Activated CD8-positive, alpha-beta T cell treated with anti-CD3 and anti-CD28 coated beads for 36 hours (primary cell): ENCODE measurements at regions of chr2 and their contacts with region 1.

Region 1: DNA sequence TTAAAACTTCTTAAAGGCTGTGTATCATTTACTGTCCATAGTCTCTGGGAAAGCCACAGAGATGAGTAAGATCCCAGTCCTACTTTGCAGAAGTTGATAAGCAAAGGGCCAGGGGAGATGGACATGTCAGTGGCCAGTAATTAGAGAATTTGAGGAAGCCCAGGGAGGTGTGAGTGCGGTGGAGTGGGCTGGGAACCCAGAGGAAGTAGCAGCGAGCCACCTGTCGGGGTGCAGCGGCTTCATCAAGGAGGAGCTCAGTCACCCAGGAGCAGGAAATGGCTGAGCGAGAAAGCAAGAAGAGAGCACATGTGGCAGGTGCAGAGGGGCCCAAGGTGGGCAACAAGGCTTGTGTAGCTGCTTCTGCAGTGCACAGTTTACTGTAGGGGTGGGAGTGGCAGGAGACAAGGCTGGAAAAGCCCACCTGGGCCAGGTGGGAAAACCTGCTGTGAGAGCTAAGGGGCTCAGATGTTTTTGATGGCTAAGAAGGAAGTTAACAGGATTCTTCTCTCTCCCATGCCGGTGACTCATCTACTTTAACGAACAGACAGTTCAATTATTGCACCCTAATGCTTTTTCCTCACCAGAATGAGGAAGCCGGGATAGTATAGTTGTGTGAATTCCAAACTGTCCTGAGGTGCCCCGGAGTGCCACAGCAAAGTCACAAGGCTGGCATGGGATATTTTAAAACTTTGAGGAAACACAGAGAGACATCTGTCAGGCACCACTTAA is 34.8 kb upstream of the MGAT5 start:
- DNase-seq: peak; percentile 63
- ATAC-seq: no peak
- H3K4me3 Mint-ChIP-seq: peak overlapping the region; percentile 52
- H3K27ac Mint-ChIP-seq: peak overlapping the region; percentile 92
- H3K4me1 Mint-ChIP-seq: peaks cover 71% of the 10 kb centered on the region
- H3K27me3 Mint-ChIP-seq: no peaks in the 10 kb centered on the region
- CTCF ChIP-seq: no peak

Region 2: DNA sequence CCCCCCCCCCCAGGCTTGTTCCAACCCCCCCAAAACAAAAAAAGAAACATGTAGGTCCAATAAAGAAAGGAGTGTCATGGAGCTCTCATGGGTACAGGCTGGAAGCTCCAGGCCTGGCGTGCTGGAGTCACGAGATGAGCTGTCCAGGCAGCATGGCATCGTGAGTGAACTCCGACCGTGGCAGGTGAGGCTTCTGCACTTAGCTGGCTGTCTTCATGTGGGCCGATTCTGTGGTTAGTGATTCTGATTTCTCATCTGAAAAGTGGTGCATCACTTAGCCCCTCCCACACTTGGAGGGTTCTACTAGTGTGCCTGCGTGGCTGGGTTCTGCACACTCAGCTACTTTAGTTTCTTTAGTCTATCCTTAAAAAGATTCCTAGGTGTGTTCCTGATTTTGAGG is 91.6 kb before region 1 on chr2:
- CTCF ChIA-PET with region 1: interaction called, 62 read pairs
- POLR2A ChIA-PET with region 1: interaction called, 28 read pairs
- intact Hi-C with region 1: no loop called
- DNase-seq: peak; percentile 86
- ATAC-seq: peak; percentile 93
- H3K4me3 Mint-ChIP-seq: peak overlapping the region; percentile 1
- H3K27ac Mint-ChIP-seq: no peak overlapping the region
- H3K4me1 Mint-ChIP-seq: peaks cover 77% of the 10 kb centered on the region
- H3K27me3 Mint-ChIP-seq: no peaks in the 10 kb centered on the region
- CTCF ChIP-seq: no peak

Region 3: GRCh38 chr2:134207564-134208209 is 11.4 kb before region 1 on chr2:
- CTCF ChIA-PET with region 1: interaction called, 49 read pairs
- POLR2A ChIA-PET with region 1: interaction called, 7 read pairs
- intact Hi-C with region 1: no loop called
- DNase-seq: peak; percentile 80
- ATAC-seq: peak; percentile 92
- H3K4me3 Mint-ChIP-seq: no peak overlapping the region
- H3K27ac Mint-ChIP-seq: no peak overlapping the region
- H3K4me1 Mint-ChIP-seq: peaks cover 6% of the 10 kb centered on the region
- H3K27me3 Mint-ChIP-seq: no peaks in the 10 kb centered on the region
- CTCF ChIP-seq: peak; percentile 64

Region 4: GRCh38 chr2:134245340-134245984 is 26.4 kb after region 1 on chr2:
- CTCF ChIA-PET with region 1: interaction called, 47 read pairs
- POLR2A ChIA-PET with region 1: interaction called, 5 read pairs
- intact Hi-C with region 1: loop called (anchors 5 kb)
- DNase-seq: peak; percentile 90
- ATAC-seq: peak; percentile 40
- H3K4me3 Mint-ChIP-seq: no peak overlapping the region
- H3K27ac Mint-ChIP-seq: peak overlapping the region; percentile 13
- H3K4me1 Mint-ChIP-seq: peaks cover 79% of the 10 kb centered on the region
- H3K27me3 Mint-ChIP-seq: no peaks in the 10 kb centered on the region
- CTCF ChIP-seq: peak; percentile 88

Region 5: DNA sequence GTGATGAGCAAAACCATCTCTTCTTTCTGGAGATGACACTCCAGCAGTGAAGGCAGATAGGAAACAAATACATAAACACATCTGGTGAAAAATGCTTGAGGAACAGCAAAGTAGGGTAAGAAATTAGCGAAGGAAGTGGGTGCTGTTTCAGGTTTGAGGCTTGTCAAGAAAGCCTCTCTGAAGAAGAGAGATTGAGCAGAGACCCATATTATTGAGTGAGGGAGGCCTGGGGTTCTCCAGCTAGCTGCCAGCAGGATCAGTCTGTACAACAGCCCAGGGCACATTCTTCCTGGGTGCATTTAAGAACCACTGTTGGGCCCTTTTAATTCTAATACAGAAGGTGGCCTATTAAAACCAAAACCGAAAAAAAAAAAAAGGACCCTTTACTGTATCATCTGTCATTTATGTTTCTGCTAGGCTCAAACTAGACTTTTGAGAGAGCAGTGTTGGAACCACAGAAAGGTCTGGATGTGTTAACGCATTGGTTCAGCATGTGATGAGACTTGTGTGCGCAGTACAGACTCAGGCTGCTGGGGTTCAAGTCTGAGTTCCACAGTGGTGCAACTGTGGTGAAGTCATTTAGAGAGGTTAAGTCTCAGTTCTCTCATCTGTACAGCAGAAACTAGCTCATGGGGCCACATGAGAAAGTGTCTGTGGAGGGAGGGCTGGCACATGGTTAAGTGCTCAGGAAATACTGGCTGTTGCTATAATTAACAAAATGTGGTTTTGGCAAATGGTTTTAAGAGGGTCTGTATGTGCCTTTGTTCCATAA is 63.7 kb after region 1 on chr2:
- CTCF ChIA-PET with region 1: no interaction called
- POLR2A ChIA-PET with region 1: interaction called, 4 read pairs
- intact Hi-C with region 1: loop called (anchors 5 kb)
- DNase-seq: peak; percentile 82
- ATAC-seq: peak; percentile 93
- H3K4me3 Mint-ChIP-seq: peak overlapping the region; percentile 59
- H3K27ac Mint-ChIP-seq: peak overlapping the region; percentile 89
- H3K4me1 Mint-ChIP-seq: peaks cover 48% of the 10 kb centered on the region
- H3K27me3 Mint-ChIP-seq: no peaks in the 10 kb centered on the region
- CTCF ChIP-seq: no peak

Region 6: DNA sequence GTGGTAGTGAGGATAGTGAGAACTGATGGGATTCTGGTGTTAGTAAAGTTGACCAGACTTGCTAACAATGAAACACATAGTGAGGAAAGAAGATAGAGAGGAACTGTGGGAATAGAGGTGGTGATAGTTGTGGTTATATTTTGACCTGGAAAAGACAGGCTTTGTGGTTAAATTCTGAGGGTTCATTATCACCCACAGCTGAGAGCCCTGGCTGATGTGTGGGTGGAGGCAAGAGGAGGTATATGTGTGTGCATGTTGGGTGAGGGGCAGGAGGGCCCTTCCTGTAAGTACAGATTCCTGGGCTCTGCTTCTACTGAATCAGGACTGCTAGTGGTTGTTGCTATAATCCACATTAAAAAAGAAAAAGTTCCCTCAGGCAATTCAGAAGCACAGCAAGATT is 525.9 kb after region 1 on chr2:
- CTCF ChIA-PET with region 1: no interaction called
- POLR2A ChIA-PET with region 1: no interaction called
- intact Hi-C with region 1: no loop called
- DNase-seq: no peak
- ATAC-seq: no peak
- H3K4me3 Mint-ChIP-seq: no peak overlapping the region
- H3K27ac Mint-ChIP-seq: no peak overlapping the region
- H3K4me1 Mint-ChIP-seq: peaks cover 8% of the 10 kb centered on the region
- H3K27me3 Mint-ChIP-seq: peaks cover 25% of the 10 kb centered on the region
- CTCF ChIP-seq: no peak